A549 (cell line): ENCODE measurements at regions of chr2 and their contacts with region 1.

Region 1: DNA sequence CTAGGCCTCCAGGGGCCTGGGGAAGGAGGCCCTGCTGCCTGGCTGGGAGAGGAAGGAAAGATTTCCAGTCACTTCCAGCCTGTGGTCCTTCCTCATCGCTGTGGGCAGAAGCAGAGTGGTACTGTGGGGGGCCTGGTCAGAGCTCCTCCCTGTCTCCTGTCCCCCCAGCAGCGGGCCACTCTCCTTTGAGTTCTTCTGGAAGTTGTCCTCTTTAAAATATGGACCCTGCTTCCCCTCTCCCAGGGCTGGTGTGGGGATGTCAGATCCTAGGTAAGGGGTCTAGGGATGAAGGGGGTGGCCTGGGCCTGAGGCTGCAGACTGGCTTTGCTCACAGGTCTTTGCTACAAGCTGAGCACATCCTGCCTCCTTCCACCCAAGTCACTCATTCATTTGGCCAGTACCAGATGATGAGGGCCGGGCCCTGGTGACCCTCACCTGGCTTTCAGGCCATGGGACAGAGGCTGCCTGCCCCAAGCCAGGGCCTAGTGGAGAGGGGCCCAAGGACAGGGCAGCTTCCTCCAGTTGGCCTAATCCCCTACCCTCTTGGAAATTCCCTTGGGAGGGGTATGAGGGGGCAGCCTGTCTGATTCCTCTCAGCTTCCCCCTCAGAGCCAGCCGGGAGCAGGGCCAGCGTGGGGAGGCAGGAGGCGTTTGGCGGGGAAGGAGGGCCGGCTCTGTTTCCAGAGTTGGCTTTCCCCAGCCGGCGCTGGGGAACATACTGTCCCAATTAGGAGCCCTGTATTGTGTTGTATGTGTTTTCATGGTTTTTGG is 231.9 kb downstream of the DYSF start:
- DNase-seq: no peak
- ATAC-seq: no peak
- H3K4me3 ChIP-seq: no peak overlapping the region
- H3K27ac ChIP-seq: no peak overlapping the region
- H3K4me1 ChIP-seq: no peaks in the 10 kb centered on the region
- CTCF ChIP-seq: no peak
- EP300 ChIP-seq: no peak
- POLR2A ChIP-seq: no peak
- RAD21 ChIP-seq: no peak

Region 2: GRCh38 chr2:71702971-71703903 is 18.0 kb after region 1 on chr2:
- CTCF ChIA-PET with region 1: interaction called, 11 read pairs
- POLR2A ChIA-PET with region 1: no interaction called
- DNase-seq: no peak
- ATAC-seq: peak in 1 of 2 experiments; percentile 10; a peak in 1 of 6 replicates
- H3K4me3 ChIP-seq: no peak overlapping the region
- H3K27ac ChIP-seq: no peak overlapping the region
- H3K4me1 ChIP-seq: no peaks in the 10 kb centered on the region
- CTCF ChIP-seq: no peak
- EP300 ChIP-seq: no peak
- POLR2A ChIP-seq: no peak
- RAD21 ChIP-seq: no peak

Region 3: GRCh38 chr2:71923887-71924533 is 238.7 kb after region 1 on chr2:
- CTCF ChIA-PET with region 1: no interaction called
- POLR2A ChIA-PET with region 1: no interaction called
- DNase-seq: peak; percentile 77 to 83
- ATAC-seq: peak; percentile 78 to 94
- H3K4me3 ChIP-seq: no peak overlapping the region
- H3K27ac ChIP-seq: no peak overlapping the region
- H3K4me1 ChIP-seq: peaks cover 6% of the 10 kb centered on the region; the same call in 1 of the 3 replicates
- CTCF ChIP-seq: peak; percentile 93
- EP300 ChIP-seq: no peak
- POLR2A ChIP-seq: no peak
- RAD21 ChIP-seq: peak; percentile 87 to 89